ENCODE measurements at regions of chr2 and their contacts with region 1.

Region 1: DNA sequence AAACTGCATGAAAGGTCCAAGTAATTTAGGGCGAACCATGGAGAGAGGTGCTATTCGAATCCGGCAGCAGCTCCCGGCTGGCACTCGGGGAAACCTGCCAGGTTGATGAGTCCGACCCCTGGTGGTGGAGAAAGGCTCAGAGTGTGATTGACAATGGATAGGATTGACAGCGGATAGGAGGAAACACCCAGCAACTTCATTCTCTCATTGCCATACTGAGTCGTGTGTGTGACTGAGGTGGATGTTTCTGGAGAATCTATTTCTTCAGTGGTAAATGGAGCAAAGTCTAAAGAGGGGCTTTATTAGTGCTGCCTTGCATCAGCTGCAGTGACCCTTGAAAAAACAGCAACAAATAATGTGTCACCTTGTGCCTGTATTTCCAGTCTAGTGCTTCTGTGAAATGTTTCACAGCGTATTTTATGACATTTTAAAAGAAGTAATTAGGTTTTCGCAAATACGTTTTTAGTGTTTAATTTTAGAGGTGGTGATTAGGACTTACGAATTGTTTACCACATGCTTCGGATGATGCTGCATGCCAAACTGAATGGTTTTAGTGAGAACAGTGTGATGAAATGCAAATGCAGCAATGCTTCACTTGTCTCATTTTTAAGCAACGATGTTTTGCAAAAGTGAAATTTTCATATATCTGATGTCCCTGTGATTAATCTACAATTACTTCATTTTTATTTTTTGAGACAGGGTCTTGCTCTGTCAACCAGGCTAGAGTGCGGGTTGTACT is 102.0 kb downstream of the DCDC2C start:
- DNase-seq: peak; percentile 75
- H3K4me3 ChIP-seq: peak overlapping the region in 1 of 2 experiments; percentile 4; a peak in 1 of 4 replicates
- H3K27ac ChIP-seq: no peak overlapping the region
- H3K4me1 ChIP-seq: no peaks in the 10 kb centered on the region; a peak in 1 of 4 replicates
- H3K27me3 ChIP-seq: no peaks in the 10 kb centered on the region
- CTCF ChIP-seq: peak; percentile 14; the same call in 1 of the 2 replicates
- EP300 ChIP-seq: no peak
- RAD21 ChIP-seq: peak; percentile 56

Region 2: GRCh38 chr2:3692381-3692780 is 113.0 kb before region 1 on chr2:
- CTCF ChIA-PET with region 1: interaction called, 21 read pairs
- POLR2A ChIA-PET with region 1: no interaction called
- DNase-seq: peak; percentile 68
- H3K4me3 ChIP-seq: no peak overlapping the region
- H3K27ac ChIP-seq: no peak overlapping the region
- H3K4me1 ChIP-seq: no peaks in the 10 kb centered on the region
- H3K27me3 ChIP-seq: no peaks in the 10 kb centered on the region
- CTCF ChIP-seq: peak; percentile 45
- EP300 ChIP-seq: no peak
- RAD21 ChIP-seq: peak; percentile 78

Region 3: DNA sequence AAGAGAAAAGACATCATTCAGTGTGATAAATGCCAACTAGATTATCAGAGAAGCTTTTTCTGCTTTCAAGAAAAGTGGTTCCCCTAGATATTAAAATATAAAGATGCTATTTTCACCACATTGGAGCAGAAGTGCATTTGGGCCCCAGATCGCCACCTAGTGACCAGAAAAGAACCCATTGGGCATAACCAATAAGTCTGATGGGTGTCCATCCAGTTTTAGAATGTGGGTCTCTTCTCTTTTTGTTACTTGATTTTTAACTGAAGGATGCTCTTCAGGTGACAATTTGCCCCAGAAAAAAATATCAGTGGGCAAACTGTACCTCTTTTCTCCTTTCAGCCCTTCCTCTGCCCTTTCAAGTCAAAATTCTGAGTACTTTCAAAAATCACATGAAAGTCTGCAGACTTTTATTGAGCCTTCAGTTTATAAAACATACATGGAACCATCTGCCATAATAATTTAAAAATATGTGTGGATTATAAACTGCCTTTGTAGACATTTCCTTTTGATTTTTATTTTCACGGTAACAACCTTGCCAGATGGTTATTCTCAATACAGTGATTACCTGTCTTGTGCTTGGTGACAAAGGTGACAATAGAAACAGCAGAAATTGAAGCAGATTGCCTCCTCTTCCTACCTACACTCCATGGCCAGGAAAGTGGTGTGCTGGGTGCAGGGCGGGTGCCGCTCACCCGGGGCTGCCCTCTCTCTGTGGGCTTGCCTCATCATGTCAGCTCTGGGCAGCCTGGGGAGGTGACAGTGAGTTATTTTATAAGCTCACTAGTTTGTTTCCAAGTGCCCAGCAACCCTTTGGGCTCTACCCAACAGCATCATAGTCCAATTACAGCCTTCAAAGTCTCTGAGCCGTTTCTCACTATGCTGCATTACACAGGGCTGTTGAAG is 22.6 kb after region 1 on chr2:
- CTCF ChIA-PET with region 1: interaction called, 21 read pairs
- POLR2A ChIA-PET with region 1: no interaction called
- DNase-seq: peak; percentile 56
- H3K4me3 ChIP-seq: no peak overlapping the region; a peak in 1 of 4 replicates
- H3K27ac ChIP-seq: no peak overlapping the region
- H3K4me1 ChIP-seq: no peaks in the 10 kb centered on the region
- H3K27me3 ChIP-seq: no peaks in the 10 kb centered on the region
- CTCF ChIP-seq: peak; percentile 47
- EP300 ChIP-seq: no peak
- RAD21 ChIP-seq: peak; percentile 54

Region 4: DNA sequence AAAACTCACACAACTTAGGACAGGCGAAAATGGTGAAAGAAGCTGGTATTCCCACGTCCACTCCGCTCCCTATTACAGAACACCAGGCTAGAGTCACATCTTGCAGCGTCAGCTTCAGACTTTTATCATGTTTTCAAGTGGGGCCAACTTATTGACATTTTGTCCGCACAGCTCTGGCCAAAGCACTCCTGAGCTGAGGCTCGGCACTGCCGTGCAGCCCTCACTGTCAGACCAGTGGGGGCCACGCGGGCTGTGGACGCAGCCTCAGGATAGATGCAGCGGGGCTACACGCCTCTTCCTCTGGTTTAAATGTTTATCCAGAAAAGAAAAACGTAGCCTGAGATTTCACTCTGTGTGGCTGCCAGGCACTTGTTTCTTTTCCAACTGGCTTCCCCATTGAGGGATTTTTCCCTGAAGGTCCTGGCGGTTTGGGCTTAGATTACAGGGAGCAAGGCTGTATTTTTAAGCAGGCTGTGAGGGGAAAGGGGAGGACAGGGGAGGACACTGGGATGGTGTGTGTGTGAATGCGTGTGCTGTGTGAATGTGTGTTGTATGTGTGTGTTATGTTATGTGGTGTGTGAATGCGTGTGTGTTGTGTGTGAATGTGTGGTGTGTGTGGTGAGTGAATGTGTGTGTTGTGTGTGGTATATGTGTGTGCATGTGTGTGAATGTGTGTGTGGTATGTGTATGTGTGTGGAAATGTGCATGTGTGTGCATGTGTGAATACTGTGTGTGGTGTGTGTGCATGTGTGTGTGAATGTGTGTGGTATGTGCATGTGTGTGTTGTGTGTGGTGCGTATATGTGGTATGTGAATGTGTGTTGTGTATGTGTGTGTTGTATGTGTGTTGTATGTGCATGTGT is 165.7 kb after region 1 on chr2:
- CTCF ChIA-PET with region 1: no interaction called
- POLR2A ChIA-PET with region 1: no interaction called
- DNase-seq: no peak
- H3K4me3 ChIP-seq: no peak overlapping the region
- H3K27ac ChIP-seq: no peak overlapping the region
- H3K4me1 ChIP-seq: no peaks in the 10 kb centered on the region
- H3K27me3 ChIP-seq: no peaks in the 10 kb centered on the region
- CTCF ChIP-seq: no peak
- EP300 ChIP-seq: no peak
- RAD21 ChIP-seq: no peak